ENCODE measurements at regions of chr1 and their contacts with region 1.

Region 1: DNA sequence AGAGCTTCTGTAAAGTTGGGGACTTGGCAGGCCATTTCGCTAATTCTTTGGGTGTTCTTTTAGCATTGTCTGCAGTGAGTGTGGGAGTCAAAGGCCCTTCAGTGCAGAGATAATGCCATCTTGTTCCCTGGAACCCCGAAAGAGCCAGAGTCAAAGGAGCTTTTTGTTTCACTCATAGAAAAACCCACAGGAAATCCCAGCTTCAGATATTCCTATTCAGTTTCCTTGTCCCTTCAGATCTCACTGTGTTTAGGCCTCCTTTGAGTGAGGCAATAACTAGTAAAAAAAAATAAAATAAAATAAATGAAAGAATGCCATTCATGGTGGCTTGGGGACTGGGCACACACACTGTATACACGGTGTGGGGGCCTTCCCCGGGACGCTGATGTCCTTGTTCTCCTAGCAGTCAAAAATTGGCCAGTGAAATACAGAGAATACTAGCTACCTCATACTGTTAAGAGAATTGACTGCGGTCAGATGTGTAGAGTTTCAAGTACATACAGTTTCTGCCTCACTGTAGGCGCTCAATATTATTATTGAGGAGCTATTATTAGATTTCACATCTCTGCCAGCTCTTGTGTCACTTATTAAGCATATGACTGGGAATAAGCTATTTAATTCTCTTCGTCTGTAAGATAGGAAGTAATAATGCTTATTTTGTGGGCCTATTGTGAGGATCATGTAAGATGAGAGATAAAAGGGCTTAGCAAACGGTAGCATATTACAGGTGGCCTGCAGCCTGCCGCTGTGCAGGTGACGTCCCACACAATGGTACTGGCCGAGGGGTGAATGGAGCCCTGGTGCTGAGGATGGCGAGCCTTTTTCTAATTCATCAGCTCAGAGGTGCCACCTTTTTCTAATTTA is 16.7 kb downstream of the DISC1 start:
- DNase-seq: no peak
- ATAC-seq: no peak
- H3K4me3 ChIP-seq: no peak overlapping the region
- H3K27ac ChIP-seq: no peak overlapping the region
- H3K4me1 ChIP-seq: no peaks in the 10 kb centered on the region
- CTCF ChIP-seq: no peak
- EP300 ChIP-seq: no peak
- POLR2A ChIP-seq: no peak
- RAD21 ChIP-seq: no peak

Region 2: GRCh38 chr1:231653632-231654031 is 10.3 kb after region 1 on chr1:
- CTCF ChIA-PET with region 1: interaction called, 11 read pairs
- POLR2A ChIA-PET with region 1: no interaction called
- DNase-seq: no peak
- ATAC-seq: no peak
- H3K4me3 ChIP-seq: no peak overlapping the region
- H3K27ac ChIP-seq: no peak overlapping the region
- H3K4me1 ChIP-seq: no peaks in the 10 kb centered on the region
- CTCF ChIP-seq: no peak
- EP300 ChIP-seq: no peak
- POLR2A ChIP-seq: no peak
- RAD21 ChIP-seq: no peak